ENCODE measurements at regions of chr12 and their contacts with region 1.

Region 1: GRCh38 chr12:26195641-26196420 is 458 bp downstream of the SSPN start:
- DNase-seq: peak; percentile 47 to 51
- ATAC-seq: peak; percentile 77 to 91 (median 86)
- H3K4me3 ChIP-seq: peak overlapping the region; percentile 49 to 81 (median 68)
- H3K27ac ChIP-seq: peak overlapping the region; percentile 67 to 95 (median 87)
- H3K4me1 ChIP-seq: peaks cover 0 to 47% (median 26%) of the 10 kb centered on the region in 9 donors
- H3K27me3 ChIP-seq: peaks cover 0 to 31% (median 0%) of the 10 kb centered on the region in 7 donors
- CTCF ChIP-seq: peak in 2 of 9 donors; percentile 10 to 11

Region 2: DNA sequence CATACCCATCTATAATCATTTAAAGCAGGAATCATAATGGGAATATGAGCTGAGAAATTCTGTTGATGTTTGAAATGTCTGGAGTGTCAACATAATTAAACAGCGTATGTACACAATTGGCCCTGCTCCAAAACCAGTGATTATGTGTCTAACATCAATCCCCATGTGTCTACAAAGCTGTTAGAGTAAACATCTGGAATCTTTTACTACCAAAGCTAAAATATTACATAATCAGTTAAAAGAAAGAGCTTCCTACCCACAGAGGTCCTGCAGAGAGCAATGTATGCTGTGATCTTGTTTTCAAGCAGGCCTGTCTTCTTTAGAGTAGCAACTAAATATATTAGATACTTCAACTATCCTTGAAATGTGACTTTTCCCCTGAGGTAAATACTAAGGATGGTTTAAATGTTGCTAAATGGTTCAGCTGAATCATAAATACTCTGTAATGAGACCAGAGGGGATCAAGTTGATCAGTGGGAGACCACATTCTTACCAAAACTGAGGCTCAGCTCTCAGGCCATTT is 163.1 kb before region 1 on chr12:
- intact Hi-C with region 1: no loop called
- DNase-seq: no peak
- ATAC-seq: no peak
- H3K4me3 ChIP-seq: no peak overlapping the region
- H3K27ac ChIP-seq: peak overlapping the region in 1 of 10 donors; percentile 7
- H3K4me1 ChIP-seq: peaks cover 0 to 51% (median 18%) of the 10 kb centered on the region in 9 donors
- H3K27me3 ChIP-seq: no peaks in the 10 kb centered on the region
- CTCF ChIP-seq: no peak

Region 3: DNA sequence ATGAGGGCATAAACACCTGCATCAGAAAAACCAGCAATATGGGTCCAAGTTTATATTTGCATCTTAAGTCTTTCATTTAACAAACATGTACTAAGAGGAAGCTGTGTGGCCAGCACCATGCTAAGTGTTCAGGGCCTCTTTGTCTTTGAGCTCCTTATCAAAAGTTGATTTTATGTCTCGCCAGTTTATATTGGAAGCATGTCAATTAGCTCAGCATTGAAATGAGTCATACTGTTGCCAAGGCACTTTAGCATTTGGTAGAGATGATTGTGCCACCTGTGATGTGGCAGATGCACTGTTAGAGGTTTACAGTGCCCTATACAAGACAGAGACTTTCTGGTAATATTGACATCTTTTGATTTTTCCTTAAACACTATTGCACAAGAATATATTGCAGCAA is 139.5 kb before region 1 on chr12:
- intact Hi-C with region 1: no loop called
- DNase-seq: no peak
- ATAC-seq: peak in 1 of 8 donors; percentile 71
- H3K4me3 ChIP-seq: no peak overlapping the region
- H3K27ac ChIP-seq: no peak overlapping the region
- H3K4me1 ChIP-seq: peaks cover 0 to 18% (median 9%) of the 10 kb centered on the region in 9 donors
- H3K27me3 ChIP-seq: no peaks in the 10 kb centered on the region
- CTCF ChIP-seq: no peak

Region 4: DNA sequence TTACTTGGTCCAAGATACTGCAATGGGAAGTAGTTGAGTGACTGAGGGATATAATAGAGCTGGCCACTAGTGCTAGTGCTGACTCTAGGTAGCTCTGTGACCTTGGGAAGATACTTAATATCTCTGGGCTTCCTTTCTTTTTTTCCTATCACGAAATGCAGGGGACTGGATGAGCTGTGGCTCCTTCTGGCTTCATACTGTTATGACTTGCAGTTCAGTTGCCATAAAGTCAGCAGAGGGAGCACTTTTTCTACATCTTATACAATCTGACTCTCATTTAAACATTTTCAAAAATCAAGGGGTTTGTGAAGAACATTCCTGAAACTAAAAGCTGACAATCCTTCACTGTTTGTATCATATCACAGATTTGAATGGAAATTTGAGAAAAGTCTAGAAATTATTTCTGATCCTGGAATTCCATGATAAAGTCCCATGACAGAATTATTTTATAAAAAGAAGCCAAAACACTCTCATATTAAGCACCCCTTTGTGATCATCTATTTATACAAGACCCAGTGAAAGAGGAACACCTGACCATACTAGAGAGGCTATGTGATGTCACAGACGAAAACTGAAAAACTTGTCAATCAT is 76.3 kb before region 1 on chr12:
- intact Hi-C with region 1: loop called in 2 of 10 experiments (anchors 2 to 5 kb)
- DNase-seq: no peak
- ATAC-seq: peak in 3 of 8 donors; percentile 22 to 34 (median 31)
- H3K4me3 ChIP-seq: peak overlapping the region in 1 of 10 donors; percentile 61
- H3K27ac ChIP-seq: peak overlapping the region in 7 of 10 donors; percentile 18 to 98 (median 97)
- H3K4me1 ChIP-seq: peaks cover 3 to 65% (median 31%) of the 10 kb centered on the region in 9 donors
- H3K27me3 ChIP-seq: peaks cover 0 to 55% (median 0%) of the 10 kb centered on the region in 7 donors
- CTCF ChIP-seq: peak; percentile 3 to 77 (median 52)

Region 5: DNA sequence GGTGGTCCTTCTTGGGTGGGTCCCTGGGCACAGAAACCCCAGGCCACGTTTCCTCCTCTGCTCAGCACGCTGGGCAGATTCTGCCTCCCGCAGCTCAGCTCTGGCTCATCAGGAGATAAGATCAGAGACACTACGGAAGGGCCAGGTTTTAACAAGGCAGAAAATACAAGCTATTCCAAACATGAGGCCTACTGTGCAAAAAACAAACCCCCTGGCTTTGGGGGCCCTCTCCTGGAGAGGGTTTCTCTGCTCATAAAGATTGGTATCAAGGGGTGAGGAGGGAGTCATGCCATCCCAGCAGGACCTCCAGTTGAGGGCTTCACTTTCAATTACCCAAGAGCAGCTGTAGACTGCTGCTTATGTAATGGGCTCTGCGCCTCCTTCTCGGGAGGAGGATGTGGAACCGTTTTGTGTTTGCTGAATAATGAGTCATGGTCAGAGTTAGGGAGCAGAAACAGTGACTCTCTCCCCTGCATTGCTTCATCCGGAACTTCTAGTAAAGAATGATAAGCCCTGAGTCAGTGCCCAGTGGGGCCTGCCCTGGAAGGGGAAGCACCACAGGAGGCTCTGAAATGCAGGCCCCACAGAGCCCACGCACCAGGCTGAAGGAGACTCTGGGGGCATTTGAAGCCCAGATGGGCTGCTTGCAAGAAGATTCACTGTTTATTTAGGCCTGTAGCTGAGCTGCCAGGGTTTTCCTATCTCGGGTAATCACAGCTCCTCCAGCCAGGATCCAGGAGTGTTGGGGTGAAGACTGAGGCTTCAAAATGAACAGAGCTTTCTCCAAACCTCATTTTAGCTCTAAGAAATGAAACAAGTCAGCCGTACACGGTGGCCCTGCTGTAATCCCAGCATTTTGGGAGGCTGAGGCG is 78.8 kb after region 1 on chr12:
- intact Hi-C with region 1: loop called in 1 of 10 experiments (anchors 5 kb)
- DNase-seq: peak; percentile 63 to 87
- ATAC-seq: peak; percentile 93 to 99 (median 95)
- H3K4me3 ChIP-seq: no peak overlapping the region
- H3K27ac ChIP-seq: peak overlapping the region; percentile 25 to 89 (median 80)
- H3K4me1 ChIP-seq: peaks cover 10 to 78% (median 42%) of the 10 kb centered on the region in 9 donors
- H3K27me3 ChIP-seq: no peaks in the 10 kb centered on the region
- CTCF ChIP-seq: no peak

Region 6: DNA sequence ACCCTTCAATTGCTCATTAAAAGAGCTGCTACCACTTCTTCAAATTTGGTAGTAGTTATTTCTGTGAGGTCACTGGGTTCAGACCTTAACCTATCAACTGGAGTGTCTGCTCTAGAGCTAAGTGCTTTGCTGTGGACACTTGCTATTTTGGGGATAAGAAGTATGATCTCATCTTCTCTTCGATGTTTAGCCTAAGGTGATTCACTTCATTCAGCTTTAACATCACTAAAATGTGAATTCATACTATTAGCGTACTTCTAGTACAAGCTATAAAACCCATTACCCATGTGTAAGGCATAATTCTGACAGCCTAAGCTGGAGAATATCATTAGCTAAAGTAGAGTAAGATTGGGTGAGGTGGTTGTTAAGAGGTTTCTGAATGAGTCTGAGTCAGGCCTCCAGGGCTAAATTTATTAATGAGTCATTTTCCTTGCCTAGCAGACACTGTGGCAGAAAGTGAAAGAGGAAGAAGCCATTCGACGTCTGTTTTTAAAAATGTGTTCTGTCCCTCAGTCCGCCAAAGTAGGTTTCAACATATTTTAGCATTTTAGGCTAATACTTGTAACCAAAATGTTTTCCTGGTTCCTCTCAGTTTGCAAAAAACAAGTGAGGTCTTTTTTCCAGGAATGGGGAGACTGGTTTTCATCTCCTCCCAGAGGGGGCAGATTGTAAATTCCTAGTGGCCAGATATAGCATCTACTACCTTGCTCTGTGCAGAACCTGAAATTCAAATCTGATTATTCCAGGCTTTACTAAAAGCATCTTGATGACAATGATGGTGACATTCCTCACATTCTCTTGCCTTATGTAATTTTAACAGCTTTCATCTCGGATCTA is 103.2 kb after region 1 on chr12:
- intact Hi-C with region 1: loop called in 1 of 10 experiments (anchors 5 kb)
- DNase-seq: peak in 1 of 2 donors; percentile 30
- ATAC-seq: peak; percentile 88 to 98 (median 94)
- H3K4me3 ChIP-seq: peak overlapping the region in 4 of 10 donors; percentile 4 to 30 (median 22)
- H3K27ac ChIP-seq: peak overlapping the region in 8 of 10 donors; percentile 32 to 89 (median 69)
- H3K4me1 ChIP-seq: peaks cover 0 to 31% (median 20%) of the 10 kb centered on the region in 9 donors
- H3K27me3 ChIP-seq: no peaks in the 10 kb centered on the region
- CTCF ChIP-seq: peak in 4 of 9 donors; percentile 23 to 31 (median 30)

Measured in heart right ventricle (tissue), 16 donors.